Panc1 (cell line): ENCODE measurements at regions of chr1 and their contacts with region 1.

Region 1: DNA sequence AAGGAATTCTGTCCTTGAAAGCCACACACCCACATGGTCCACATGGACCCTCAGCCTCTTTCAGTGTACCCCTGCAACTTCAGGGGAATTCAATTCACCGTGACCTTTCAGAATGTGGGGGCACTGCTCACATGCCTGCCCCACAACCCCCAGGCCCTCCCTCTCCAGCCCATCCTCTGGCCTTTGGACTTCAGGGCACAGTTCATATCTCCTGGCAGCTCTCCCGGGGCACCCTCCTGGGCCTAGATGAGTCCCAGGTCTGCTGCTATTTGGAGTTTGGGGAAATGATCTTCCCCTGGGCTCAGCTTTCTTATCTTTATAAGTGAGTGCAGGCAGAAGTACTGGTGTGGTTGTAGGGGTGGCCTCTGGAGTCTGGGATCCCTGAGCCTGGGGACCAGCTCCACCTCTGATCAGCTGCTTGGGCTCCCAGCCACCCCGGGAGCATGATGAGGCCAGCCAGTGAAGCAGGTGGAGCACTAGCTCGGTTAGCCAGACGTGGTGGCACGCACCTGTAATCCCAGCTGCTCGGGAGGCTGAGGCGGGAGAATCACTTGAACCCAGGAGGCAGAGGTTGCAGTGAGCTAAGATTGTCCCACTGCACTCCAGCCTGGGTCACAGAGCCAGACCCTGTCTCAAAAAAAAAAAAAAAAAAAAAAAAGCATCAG is 15.8 kb downstream of the C1orf167 start:
- DNase-seq: no peak
- ATAC-seq: no peak
- H3K4me3 ChIP-seq: no peak overlapping the region
- H3K27ac ChIP-seq: no peak overlapping the region
- H3K4me1 ChIP-seq: no peaks in the 10 kb centered on the region
- H3K27me3 ChIP-seq: no peaks in the 10 kb centered on the region
- CTCF ChIP-seq: no peak

Region 2: DNA sequence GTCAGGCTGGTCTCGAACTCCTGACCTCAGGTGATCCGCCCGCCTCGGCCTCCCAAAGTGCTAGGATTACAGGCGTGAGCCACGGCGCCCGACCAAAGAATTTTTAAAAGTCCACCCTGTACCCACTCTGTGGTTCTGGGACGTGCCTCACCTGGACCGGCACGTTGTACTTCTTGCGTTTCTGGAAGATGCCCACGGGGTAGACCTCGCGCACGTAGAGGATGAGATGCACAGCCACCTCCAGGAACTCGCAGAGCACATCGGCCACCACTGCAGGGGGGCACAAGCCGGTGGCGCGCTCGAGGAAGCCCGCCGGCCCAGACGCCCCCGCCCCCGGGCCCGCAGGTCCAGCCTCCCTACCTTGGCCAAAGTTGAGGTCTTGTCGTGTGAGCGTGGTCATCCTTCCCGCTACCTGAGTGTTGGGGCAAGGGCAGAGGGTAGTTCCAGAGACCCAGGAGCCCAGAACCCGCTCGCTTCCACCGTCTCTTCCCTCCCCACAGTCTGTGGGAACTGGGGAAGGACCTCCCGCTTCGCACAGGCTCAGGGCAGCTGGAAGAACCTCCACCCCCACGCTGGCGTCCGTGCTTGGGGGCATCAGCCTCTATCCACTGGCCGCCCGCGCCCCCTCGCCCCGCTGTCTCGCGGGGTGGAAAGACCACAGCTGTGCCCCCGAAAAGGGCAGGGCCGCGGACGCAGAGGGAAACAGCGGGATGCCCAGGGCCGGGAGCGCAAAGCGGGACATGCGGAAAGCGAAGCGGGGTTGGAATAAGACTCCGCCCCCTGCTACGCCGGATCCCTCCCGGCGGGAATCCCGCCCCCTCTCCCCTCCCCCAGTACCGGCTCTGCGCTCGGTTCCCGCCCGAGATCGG is 97.4 kb before region 1 on chr1:
- CTCF ChIA-PET with region 1: interaction called, 14 read pairs
- POLR2A ChIA-PET with region 1: no interaction called
- in situ Hi-C with region 1: no loop called
- intact Hi-C with region 1: no loop called
- DNase-seq: no peak
- ATAC-seq: peak; percentile 82
- H3K4me3 ChIP-seq: peak overlapping the region; percentile 86 to 87
- H3K27ac ChIP-seq: peak overlapping the region; percentile 81
- H3K4me1 ChIP-seq: peaks cover 7% of the 10 kb centered on the region
- H3K27me3 ChIP-seq: no peaks in the 10 kb centered on the region
- CTCF ChIP-seq: no peak

Region 3: GRCh38 chr1:11761988-11762406 is 15.8 kb before region 1 on chr1 and contains the start of gene C1orf167:
- CTCF ChIA-PET with region 1: no interaction called
- POLR2A ChIA-PET with region 1: interaction called, 14 read pairs
- in situ Hi-C with region 1: no loop called
- intact Hi-C with region 1: no loop called
- DNase-seq: no peak
- ATAC-seq: peak; percentile 31; the same call in 1 of the 2 replicates
- H3K4me3 ChIP-seq: no peak within 1 kb of the TSS
- H3K27ac ChIP-seq: no peak within 1 kb of the TSS
- H3K4me1 ChIP-seq: no peaks in the 10 kb centered on the region
- H3K27me3 ChIP-seq: no peaks in the 10 kb centered on the region
- CTCF ChIP-seq: no peak
- total RNA-seq, gene C1orf167: not detected